ENCODE measurements at regions of chr12 and their contacts with region 1.

Region 1: DNA sequence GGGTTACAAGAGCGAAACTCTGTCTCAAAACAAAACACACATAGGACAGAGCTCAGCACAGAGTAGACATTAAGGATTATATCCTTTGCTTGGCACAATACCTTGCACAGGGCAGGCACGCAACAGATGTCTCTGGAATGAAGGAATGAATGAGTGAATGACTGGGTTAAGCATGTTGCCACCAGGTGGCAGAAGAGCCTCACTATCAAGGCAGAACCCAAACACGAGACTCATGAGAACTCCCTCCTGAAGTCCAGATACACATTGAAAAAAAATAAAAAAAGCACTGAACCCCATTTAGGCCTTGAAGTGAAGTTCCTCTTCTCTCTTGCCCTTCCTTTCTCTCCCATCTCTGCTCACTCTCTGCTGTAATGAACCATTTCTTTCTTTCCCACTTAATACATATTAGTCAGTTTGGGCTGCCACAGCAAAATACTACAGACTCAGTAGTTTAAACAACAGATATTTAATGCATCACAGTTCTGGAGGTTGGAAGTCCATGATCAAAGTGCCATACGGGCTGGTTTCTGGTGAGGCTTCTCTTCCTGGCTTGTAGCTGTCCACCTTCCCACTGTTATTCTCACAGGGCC is 26.6 kb upstream of the LTA4H start:
- H3K4me3 Mint-ChIP-seq: no peak overlapping the region
- H3K27ac Mint-ChIP-seq: no peak overlapping the region
- H3K4me1 Mint-ChIP-seq: peaks cover 34% of the 10 kb centered on the region
- H3K27me3 Mint-ChIP-seq: no peaks in the 10 kb centered on the region

Region 2: DNA sequence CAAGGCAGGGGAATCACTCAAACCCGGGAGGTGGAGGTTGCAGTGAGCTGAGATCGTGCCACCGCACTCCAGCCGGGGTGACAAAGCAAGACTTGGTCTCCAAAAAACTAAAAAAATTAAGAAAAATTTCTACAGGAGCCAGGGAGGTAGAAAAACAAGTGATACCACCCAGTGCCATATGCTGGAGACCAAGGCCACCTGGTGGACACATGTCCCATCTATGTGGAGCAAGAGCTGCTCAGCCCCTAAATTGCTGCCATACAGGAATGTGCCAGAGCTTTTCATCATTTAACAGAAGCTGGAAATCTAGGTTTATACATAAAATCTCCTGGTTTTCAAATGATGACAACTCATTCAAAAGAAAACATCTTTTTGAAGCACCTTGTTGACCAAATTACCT is 70.9 kb after region 1 on chr12:
- intact Hi-C with region 1: loop called (anchors 2 kb)
- H3K4me3 Mint-ChIP-seq: no peak overlapping the region
- H3K27ac Mint-ChIP-seq: no peak overlapping the region
- H3K4me1 Mint-ChIP-seq: peaks cover 23% of the 10 kb centered on the region
- H3K27me3 Mint-ChIP-seq: peaks cover 37% of the 10 kb centered on the region

Region 3: GRCh38 chr12:96219698-96220206 is 157.8 kb after region 1 on chr12:
- intact Hi-C with region 1: loop called (anchors 1 kb)
- H3K4me3 Mint-ChIP-seq: no peak overlapping the region
- H3K27ac Mint-ChIP-seq: peak overlapping the region; percentile 14
- H3K4me1 Mint-ChIP-seq: peaks cover 32% of the 10 kb centered on the region
- H3K27me3 Mint-ChIP-seq: no peaks in the 10 kb centered on the region

Region 4: DNA sequence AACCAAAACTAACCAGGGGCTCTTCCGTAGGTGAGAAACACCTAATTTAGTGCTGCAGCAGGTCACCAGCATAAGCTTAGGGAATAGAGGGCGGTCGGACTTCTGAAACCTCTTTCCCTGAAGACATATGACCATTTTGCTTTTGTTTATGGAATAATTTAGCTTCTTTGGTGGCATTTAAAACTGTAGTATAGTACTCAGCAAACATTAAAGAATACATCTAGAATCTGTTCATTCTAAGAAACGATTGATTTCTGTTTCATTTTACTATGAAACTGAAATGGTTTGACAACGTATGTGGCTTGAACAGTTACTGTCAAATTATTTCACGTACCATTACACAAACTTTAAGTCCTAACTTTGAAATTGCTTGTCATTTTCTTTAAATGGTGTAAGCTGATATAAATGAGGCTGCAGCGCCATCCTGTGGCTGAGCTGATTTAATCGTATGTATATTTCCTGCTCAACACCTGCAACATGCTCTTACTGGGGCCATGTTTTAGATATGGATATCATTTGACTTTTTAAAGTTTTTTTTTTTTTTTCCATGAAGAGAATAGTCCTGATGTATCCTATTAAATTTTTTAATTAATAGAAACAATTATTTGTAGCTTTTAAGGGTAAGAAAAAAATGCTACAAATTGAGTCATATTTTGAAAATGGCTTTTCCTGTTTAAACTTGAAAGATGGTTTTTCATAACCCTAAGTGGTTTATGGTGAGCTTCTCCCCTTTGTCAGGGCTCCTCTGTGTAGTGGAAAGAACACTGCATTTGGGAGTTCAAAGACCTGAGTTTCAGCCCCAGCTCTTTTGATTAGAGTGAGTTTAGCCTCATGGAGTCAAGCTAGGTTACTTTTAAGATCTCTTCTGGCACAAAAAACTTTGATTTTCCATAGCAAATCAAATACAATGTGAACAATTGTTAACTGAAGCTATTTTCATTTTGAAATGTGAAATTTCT is 454.8 kb after region 1 on chr12:
- intact Hi-C with region 1: loop called (anchors 1 kb)
- H3K4me3 Mint-ChIP-seq: no peak overlapping the region
- H3K27ac Mint-ChIP-seq: no peak overlapping the region
- H3K4me1 Mint-ChIP-seq: no peaks in the 10 kb centered on the region
- H3K27me3 Mint-ChIP-seq: no peaks in the 10 kb centered on the region

Measured in dendritic cell treated with granulocyte-macrophage colony-stimulating factor and Interleukin-4, amounts not matched to agents 40 ng/mL and 50 ng/mL, for 4 days (primary cell).